Colonic mucosa (tissue), 4 donors: ENCODE measurements at regions of chr15 and their contacts with region 1.

Region 1: DNA sequence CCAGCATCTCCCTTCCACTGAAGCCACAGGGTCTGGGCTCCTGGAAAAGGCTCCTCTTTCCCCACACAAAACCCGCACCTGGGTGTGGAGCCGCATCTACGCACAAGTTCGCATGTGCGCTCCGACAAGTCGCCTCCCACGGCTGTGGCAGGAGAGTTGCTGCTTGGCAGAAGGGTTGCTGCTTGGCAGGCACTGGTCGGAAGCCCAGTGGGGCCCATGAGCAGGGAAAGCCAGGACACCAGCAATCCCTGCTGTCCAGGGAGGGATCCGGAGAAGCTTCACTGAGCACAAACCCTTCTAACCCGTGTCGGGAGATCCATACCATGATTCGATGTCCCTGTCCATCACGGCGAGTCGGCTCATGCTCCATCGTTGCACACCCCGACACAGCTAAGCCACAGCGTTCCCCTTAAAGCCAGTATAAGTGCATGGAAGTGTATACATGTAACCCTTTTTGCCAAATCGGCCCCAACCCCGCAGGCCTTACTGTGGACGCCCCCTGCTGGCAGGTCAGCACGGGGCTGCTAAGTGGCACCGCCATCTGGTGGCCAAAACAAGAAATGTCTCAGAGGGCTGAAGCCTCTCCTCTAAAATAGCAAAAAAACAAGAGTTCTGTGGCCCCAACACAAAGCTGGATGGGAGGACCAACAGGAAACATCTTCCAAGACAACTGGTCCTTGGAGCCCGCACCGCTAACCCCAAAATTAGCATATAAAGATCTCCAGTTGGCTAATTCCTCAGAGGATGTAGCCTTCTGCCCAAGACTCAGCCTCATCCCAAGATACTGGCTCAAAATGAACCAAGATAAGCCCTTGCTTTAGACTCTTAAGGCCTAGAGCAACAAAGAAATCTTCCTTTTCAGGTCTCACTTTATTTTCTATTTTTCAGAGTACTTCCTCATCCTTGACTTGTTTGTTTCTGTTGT is 8.3 kb downstream of the ANKRD63 start:
- DNase-seq: peak; percentile 81
- H3K4me3 ChIP-seq: no peak overlapping the region
- H3K27ac ChIP-seq: no peak overlapping the region
- H3K4me1 ChIP-seq: peaks cover 2% of the 10 kb centered on the region
- H3K27me3 ChIP-seq: peaks cover under 1% of the 10 kb centered on the region
- CTCF ChIP-seq: peak; percentile 100

Region 2: GRCh38 chr15:39782441-39783138 is 492.0 kb before region 1 on chr15 and contains the start of gene FSIP1:
- intact Hi-C with region 1: loop called (anchors 5 kb)
- DNase-seq: peak; percentile 98
- H3K4me3 ChIP-seq: peak within 1 kb of the TSS; percentile 81
- H3K27ac ChIP-seq: peak within 1 kb of the TSS; percentile 82
- H3K4me1 ChIP-seq: no peaks in the 10 kb centered on the region
- H3K27me3 ChIP-seq: no peaks in the 10 kb centered on the region
- CTCF ChIP-seq: no peak
- total RNA-seq, gene FSIP1: 4.1 to 5.3 TPM

Region 3: DNA sequence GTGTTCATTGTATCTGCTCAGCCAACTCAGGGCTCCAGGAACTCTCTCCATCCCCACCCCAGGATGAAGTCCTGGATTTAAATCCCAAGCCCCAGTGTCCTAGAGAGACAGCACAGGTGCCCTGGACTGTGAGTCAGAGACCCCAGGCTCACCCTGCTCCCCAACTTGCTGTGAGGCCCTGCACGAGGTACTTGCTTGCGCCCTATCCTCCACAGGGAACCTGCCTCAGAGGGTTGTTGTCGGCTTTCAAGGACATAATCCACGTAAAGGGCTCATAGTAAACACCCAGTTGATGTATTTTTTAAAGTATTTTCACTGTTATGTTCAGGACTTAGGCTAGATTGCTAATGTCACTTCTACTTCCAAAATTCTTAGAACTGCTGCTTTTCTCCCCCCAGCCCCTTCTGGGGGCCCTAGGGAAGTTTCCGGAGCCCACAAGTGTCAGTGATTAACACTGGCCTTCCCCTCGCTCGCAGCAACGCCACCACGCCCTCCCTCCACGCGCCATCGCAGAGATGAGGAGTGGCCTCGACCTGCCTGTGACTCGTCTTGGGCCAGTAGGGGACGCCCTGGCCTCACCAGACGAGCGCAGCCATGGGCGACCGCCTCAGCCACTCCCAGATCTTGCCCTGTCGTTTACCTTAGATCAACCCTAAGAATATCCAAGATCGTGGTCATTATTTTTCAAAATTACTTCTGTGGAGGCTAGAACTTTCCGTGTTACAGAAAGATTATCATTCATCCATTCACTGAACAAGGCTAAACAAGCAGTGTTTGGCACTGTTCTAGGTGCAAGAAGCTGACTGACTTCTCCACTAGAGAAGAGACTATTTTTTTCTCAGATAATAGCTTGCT is 229.7 kb before region 1 on chr15:
- intact Hi-C with region 1: loop called (anchors 5 kb)
- DNase-seq: peak; percentile 94
- H3K4me3 ChIP-seq: no peak overlapping the region
- H3K27ac ChIP-seq: no peak overlapping the region
- H3K4me1 ChIP-seq: peaks cover 29% of the 10 kb centered on the region
- H3K27me3 ChIP-seq: no peaks in the 10 kb centered on the region
- CTCF ChIP-seq: peak; percentile 85

Region 4: GRCh38 chr15:40160689-40161688 is 113.6 kb before region 1 on chr15 and contains the start of gene BUB1B:
- intact Hi-C with region 1: no loop called
- DNase-seq: peak; percentile 96
- H3K4me3 ChIP-seq: peak within 1 kb of the TSS; percentile 55
- H3K27ac ChIP-seq: no peak within 1 kb of the TSS
- H3K4me1 ChIP-seq: peaks cover 4% of the 10 kb centered on the region
- H3K27me3 ChIP-seq: no peaks in the 10 kb centered on the region
- CTCF ChIP-seq: no peak
- total RNA-seq, gene BUB1B: 10.2 to 48.3 TPM

Region 5: GRCh38 chr15:40217159-40217824 is 57.3 kb before region 1 on chr15:
- intact Hi-C with region 1: loop called (anchors 2 kb)
- DNase-seq: peak; percentile 66
- H3K4me3 ChIP-seq: no peak overlapping the region
- H3K27ac ChIP-seq: no peak overlapping the region
- H3K4me1 ChIP-seq: no peaks in the 10 kb centered on the region
- H3K27me3 ChIP-seq: no peaks in the 10 kb centered on the region
- CTCF ChIP-seq: peak; percentile 86

Region 6: GRCh38 chr15:40310001-40310959 is 35.7 kb after region 1 on chr15:
- intact Hi-C with region 1: loop called (anchors 5 kb)
- DNase-seq: peak; percentile 64
- H3K4me3 ChIP-seq: no peak overlapping the region
- H3K27ac ChIP-seq: no peak overlapping the region
- H3K4me1 ChIP-seq: no peaks in the 10 kb centered on the region
- H3K27me3 ChIP-seq: no peaks in the 10 kb centered on the region
- CTCF ChIP-seq: peak; percentile 68

Region 7: DNA sequence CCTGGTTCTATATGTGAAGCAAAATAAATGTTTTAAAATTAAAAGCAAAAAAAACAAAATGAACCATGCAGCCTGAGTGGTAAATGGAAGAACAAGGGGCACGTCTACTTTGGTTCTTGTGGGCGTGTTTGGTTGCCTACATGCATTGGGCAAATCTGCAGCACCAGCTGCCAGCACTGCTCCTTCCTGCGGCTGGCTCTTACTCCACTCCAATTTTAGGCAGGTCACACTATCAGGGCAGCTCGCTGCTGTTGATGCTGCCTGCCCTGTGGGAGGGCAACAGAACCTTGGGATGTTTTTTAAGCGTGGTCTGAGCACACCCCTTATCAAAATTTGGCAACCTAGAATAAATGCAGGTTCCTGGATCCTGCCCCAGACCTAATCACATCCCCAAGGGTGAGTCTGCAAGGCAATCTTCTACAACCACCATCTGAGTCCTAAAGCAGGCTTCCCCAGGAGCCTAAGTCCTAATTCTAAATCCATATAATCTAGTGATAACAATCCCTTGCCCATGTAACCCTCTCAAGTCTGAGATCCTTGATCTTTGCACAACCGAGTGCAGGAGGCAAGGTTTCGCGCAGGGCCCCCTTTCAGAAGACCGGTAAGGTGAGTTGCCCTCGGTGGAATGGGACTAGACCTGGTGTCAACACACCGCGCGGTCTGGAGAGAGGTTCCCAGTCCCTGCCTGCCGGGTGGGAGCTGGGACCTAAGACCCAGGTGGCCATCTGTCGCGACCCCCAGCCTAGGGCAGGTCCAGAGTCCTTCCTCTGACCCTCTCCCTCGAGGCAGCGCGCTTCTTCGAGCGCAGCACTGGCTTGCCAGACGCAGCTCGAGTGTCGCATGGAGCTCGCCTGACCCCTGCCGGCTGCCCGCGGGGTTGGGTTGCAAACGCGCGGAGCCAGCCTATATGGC is 146.9 kb after region 1 on chr15:
- intact Hi-C with region 1: loop called (anchors 5 kb)
- DNase-seq: peak; percentile 89
- H3K4me3 ChIP-seq: no peak overlapping the region
- H3K27ac ChIP-seq: peak overlapping the region; percentile 50
- H3K4me1 ChIP-seq: peaks cover 4% of the 10 kb centered on the region
- H3K27me3 ChIP-seq: no peaks in the 10 kb centered on the region
- CTCF ChIP-seq: peak; percentile 88